Transverse colon (tissue), 4 donors: ENCODE measurements at regions of chr16 and their contacts with region 1.

Region 1: DNA sequence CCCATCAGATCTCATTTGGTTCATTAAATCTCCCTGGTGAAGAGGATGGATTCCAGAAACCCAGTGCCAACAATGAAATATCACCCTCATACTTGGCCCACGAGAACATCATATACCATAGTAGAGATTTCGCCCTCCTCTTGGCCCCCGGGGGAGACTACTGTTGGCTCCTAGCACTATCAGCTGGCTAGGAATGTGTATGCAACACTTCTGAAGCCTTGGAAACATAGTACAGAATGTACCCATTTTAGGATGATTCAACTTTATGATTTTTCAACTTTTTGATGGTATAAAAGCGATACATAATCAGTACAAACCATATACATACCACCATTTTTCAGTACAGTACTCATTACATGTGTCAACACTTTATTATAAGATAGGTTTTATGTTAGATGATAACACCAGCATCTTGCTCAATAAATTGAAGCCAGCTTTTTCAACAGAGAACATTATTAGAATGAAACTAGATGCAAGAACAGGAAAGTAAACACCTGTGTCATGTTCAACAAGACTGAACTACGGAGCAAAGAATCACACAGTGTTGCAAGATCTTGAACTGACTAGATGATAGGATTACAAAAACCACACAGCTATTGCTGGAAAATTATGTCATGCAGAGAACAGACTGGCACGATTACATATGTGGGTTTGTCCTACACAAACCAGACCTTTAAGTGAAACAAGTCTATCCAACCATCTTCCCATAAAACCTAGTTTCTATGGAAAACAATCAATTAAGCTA is 17.2 kb downstream of the RSL1D1 start:
- DNase-seq: no peak
- H3K4me3 ChIP-seq: no peak overlapping the region
- H3K27ac ChIP-seq: no peak overlapping the region
- H3K4me1 ChIP-seq: no peaks in the 10 kb centered on the region
- H3K27me3 ChIP-seq: no peaks in the 10 kb centered on the region
- CTCF ChIP-seq: no peak
- EP300 ChIP-seq: no peak
- POLR2A ChIP-seq: no peak

Region 2: GRCh38 chr16:11774065-11774626 is 60.0 kb before region 1 on chr16:
- in situ Hi-C with region 1: no loop called
- intact Hi-C with region 1: loop called (anchors 5 kb)
- DNase-seq: no peak
- H3K4me3 ChIP-seq: no peak overlapping the region
- H3K27ac ChIP-seq: no peak overlapping the region
- H3K4me1 ChIP-seq: no peaks in the 10 kb centered on the region
- H3K27me3 ChIP-seq: no peaks in the 10 kb centered on the region
- CTCF ChIP-seq: no peak
- EP300 ChIP-seq: no peak
- POLR2A ChIP-seq: no peak